ENCODE measurements at regions of chr4 and their contacts with region 1.

Region 1: GRCh38 chr4:22389240-22389870 is 126.5 kb downstream of the ADGRA3 start:
- DNase-seq: peak; percentile 47 to 49
- H3K4me3 ChIP-seq: no peak overlapping the region
- H3K27ac ChIP-seq: no peak overlapping the region
- H3K4me1 ChIP-seq: peaks cover 8% of the 10 kb centered on the region; the same call in 1 of the 2 replicates
- H3K27me3 ChIP-seq: no peaks in the 10 kb centered on the region
- CTCF ChIP-seq: peak; percentile 82

Region 2: GRCh38 chr4:21512353-21512752 is 877.0 kb before region 1 on chr4:
- CTCF ChIA-PET with region 1: no interaction called
- POLR2A ChIA-PET with region 1: no interaction called
- intact Hi-C with region 1: loop called (anchors 5 kb)
- DNase-seq: no peak
- H3K4me3 ChIP-seq: no peak overlapping the region
- H3K27ac ChIP-seq: no peak overlapping the region
- H3K4me1 ChIP-seq: no peaks in the 10 kb centered on the region
- H3K27me3 ChIP-seq: no peaks in the 10 kb centered on the region
- CTCF ChIP-seq: peak; percentile 56; the same call in 1 of the 2 replicates

Region 3: GRCh38 chr4:21790438-21791029 is 598.8 kb before region 1 on chr4:
- CTCF ChIA-PET with region 1: interaction called, 9 read pairs
- POLR2A ChIA-PET with region 1: no interaction called
- intact Hi-C with region 1: loop called (anchors 1 kb)
- DNase-seq: no peak
- H3K4me3 ChIP-seq: no peak overlapping the region
- H3K27ac ChIP-seq: no peak overlapping the region
- H3K4me1 ChIP-seq: no peaks in the 10 kb centered on the region
- H3K27me3 ChIP-seq: no peaks in the 10 kb centered on the region
- CTCF ChIP-seq: peak; percentile 68

Region 4: DNA sequence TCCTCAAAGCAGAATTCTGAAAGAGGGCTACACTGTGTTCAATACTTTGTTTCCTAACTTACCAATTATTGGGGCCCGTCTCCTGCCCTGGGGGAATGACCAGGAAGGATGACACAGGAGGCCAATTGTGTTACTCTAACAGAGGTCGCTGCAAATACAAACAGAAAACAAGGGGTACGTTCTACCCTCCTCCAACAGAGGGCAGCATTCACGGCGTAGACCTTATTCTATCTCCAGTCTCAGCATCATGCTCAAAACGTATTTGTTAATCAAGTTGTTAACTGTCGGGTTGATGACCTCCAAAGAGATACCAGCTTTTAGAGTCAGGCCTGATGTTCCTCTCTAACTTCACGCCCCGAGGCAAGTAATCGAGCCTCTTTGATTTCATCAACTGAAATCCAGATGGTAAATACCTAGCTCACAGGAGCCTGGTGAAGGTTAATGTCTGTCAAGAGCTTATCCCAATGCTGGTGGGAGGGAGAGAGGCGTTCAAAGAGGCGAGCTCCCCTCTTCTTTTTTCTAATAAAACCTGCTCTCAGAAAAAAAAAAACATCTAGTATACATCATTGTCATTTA is 259.8 kb before region 1 on chr4:
- CTCF ChIA-PET with region 1: no interaction called
- POLR2A ChIA-PET with region 1: no interaction called
- intact Hi-C with region 1: loop called (anchors 10 kb)
- DNase-seq: peak in 1 of 2 experiments; percentile 15
- H3K4me3 ChIP-seq: no peak overlapping the region
- H3K27ac ChIP-seq: no peak overlapping the region
- H3K4me1 ChIP-seq: no peaks in the 10 kb centered on the region
- H3K27me3 ChIP-seq: no peaks in the 10 kb centered on the region
- CTCF ChIP-seq: peak; percentile 64

Region 5: GRCh38 chr4:22482250-22483127 is 93.1 kb after region 1 on chr4:
- CTCF ChIA-PET with region 1: no interaction called
- POLR2A ChIA-PET with region 1: interaction called, 10 read pairs
- intact Hi-C with region 1: no loop called
- DNase-seq: no peak
- H3K4me3 ChIP-seq: no peak overlapping the region
- H3K27ac ChIP-seq: no peak overlapping the region
- H3K4me1 ChIP-seq: peaks cover 7% of the 10 kb centered on the region; the same call in 1 of the 2 replicates
- H3K27me3 ChIP-seq: no peaks in the 10 kb centered on the region
- CTCF ChIP-seq: no peak